Heart left ventricle (tissue), 16 donors: ENCODE measurements at regions of chr15 and their contacts with region 1.

Region 1: DNA sequence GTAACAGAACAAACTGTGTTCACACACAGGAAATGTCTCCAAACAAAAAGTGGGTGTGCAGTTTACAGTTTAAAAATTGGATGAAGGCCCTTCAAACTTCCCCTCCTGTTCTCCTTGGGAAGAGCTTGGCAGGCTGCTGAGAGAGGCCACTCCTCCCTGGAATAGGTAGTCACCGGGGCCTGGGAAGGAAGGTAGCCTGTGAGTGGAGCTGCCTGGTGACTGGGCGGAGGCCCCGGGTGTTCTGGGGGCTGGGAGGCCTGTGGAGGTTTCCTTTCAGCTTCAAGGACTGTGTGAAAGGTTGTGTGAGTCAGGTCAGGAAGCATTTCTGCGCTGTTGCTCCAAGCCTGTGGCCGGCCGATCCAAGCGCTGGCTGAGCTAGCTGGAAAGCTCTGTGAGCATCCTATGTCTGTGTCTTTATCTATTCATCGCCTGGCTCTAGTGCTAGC is 14.1 kb downstream of the SLCO3A1 start:
- DNase-seq: peak; percentile 77 to 87 (median 80)
- ATAC-seq: peak; percentile 71 to 88 (median 82)
- H3K4me3 ChIP-seq: peak overlapping the region in 4 of 12 donors; percentile 1 to 17 (median 10)
- H3K27ac ChIP-seq: peak overlapping the region; percentile 69 to 93 (median 85)
- H3K4me1 ChIP-seq: peaks cover 23 to 94% (median 70%) of the 10 kb centered on the region in 12 donors
- H3K27me3 ChIP-seq: no peaks in the 10 kb centered on the region
- CTCF ChIP-seq: no peak
- POLR2A ChIP-seq: no peak

Region 2: GRCh38 chr15:91921188-91921842 is 53.7 kb after region 1 on chr15:
- intact Hi-C with region 1: loop called in 3 of 10 experiments (anchors 5 kb)
- DNase-seq: no peak
- ATAC-seq: peak in 1 of 4 donors; percentile 36
- H3K4me3 ChIP-seq: peak overlapping the region in 3 of 12 donors; percentile 4 to 30 (median 25)
- H3K27ac ChIP-seq: peak overlapping the region in 11 of 12 donors; percentile 43 to 87 (median 62)
- H3K4me1 ChIP-seq: peaks cover 9 to 92% (median 81%) of the 10 kb centered on the region in 12 donors
- H3K27me3 ChIP-seq: no peaks in the 10 kb centered on the region
- CTCF ChIP-seq: no peak
- POLR2A ChIP-seq: no peak

Region 3: GRCh38 chr15:91926908-91927270 is 59.3 kb after region 1 on chr15:
- intact Hi-C with region 1: loop called in 3 of 10 experiments (anchors 5 kb)
- DNase-seq: no peak
- ATAC-seq: peak; percentile 33 to 54 (median 36)
- H3K4me3 ChIP-seq: no peak overlapping the region
- H3K27ac ChIP-seq: peak overlapping the region in 11 of 12 donors; percentile 4 to 69 (median 47)
- H3K4me1 ChIP-seq: peaks cover 6 to 85% (median 76%) of the 10 kb centered on the region in 12 donors
- H3K27me3 ChIP-seq: no peaks in the 10 kb centered on the region
- CTCF ChIP-seq: no peak
- POLR2A ChIP-seq: no peak

Region 4: GRCh38 chr15:91942676-91943576 is 75.3 kb after region 1 on chr15:
- intact Hi-C with region 1: loop called in 1 of 10 experiments (anchors 10 kb)
- DNase-seq: peak in 4 of 5 donors; percentile 81 to 87 (median 86)
- ATAC-seq: peak; percentile 71 to 87 (median 86)
- H3K4me3 ChIP-seq: peak overlapping the region in 8 of 12 donors; percentile 1 to 39 (median 23)
- H3K27ac ChIP-seq: peak overlapping the region in 11 of 12 donors; percentile 30 to 86 (median 66)
- H3K4me1 ChIP-seq: peaks cover 12 to 98% (median 83%) of the 10 kb centered on the region in 12 donors
- H3K27me3 ChIP-seq: no peaks in the 10 kb centered on the region
- CTCF ChIP-seq: no peak
- POLR2A ChIP-seq: no peak

Region 5: DNA sequence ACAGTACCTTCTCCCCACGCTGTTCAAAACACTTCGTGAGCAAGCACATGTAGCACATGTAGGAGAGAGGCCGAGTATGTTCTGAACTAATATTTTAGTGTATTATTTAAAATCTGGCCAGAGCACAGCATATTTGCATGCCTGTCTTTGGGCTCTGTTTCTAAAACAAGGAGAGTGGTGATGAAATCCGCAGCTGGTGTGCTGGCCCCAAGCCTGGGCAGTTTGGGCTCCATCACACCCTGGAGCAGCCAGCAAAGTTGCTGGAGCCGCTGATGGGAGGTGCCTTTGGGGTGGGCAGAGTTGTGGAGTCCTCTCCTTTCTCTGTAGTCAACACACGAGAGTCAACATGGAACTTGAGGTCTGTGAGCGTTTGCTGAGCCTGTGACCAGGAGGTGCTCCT is 102.5 kb after region 1 on chr15:
- intact Hi-C with region 1: loop called in 1 of 10 experiments (anchors 5 kb)
- DNase-seq: peak; percentile 63 to 88 (median 81)
- ATAC-seq: peak; percentile 81 to 87 (median 83)
- H3K4me3 ChIP-seq: no peak overlapping the region
- H3K27ac ChIP-seq: peak overlapping the region in 10 of 12 donors; percentile 35 to 72 (median 57)
- H3K4me1 ChIP-seq: peaks cover 4 to 85% (median 75%) of the 10 kb centered on the region in 12 donors
- H3K27me3 ChIP-seq: no peaks in the 10 kb centered on the region
- CTCF ChIP-seq: no peak
- POLR2A ChIP-seq: no peak

Region 6: GRCh38 chr15:92069308-92070250 is 202.0 kb after region 1 on chr15:
- intact Hi-C with region 1: loop called in 1 of 10 experiments (anchors 5 kb)
- DNase-seq: peak in 4 of 5 donors; percentile 58 to 74 (median 64)
- ATAC-seq: peak; percentile 42 to 86 (median 82)
- H3K4me3 ChIP-seq: peak overlapping the region in 9 of 12 donors; percentile 2 to 51 (median 31)
- H3K27ac ChIP-seq: peak overlapping the region in 11 of 12 donors; percentile 25 to 87 (median 65)
- H3K4me1 ChIP-seq: peaks cover 0 to 75% (median 52%) of the 10 kb centered on the region in 12 donors
- H3K27me3 ChIP-seq: no peaks in the 10 kb centered on the region
- CTCF ChIP-seq: no peak
- POLR2A ChIP-seq: no peak